Head of caudate nucleus (tissue), 42 donors: ENCODE measurements at regions of chr21 and their contacts with region 1.

Region 1: GRCh38 chr21:36104317-36105300 is 30.3 kb upstream of the CBR3 start:
- DNase-seq: peak; percentile 62 to 96 (median 84)

Region 2: GRCh38 chr21:36060159-36060921 is 44.3 kb before region 1 on chr21 and contains the start of gene SETD4:
- intact Hi-C with region 1: loop called (anchors 5 kb)
- DNase-seq: peak; percentile 84 to 98 (median 94)